ENCODE measurements at regions of chr6 and their contacts with region 1.

Region 1: DNA sequence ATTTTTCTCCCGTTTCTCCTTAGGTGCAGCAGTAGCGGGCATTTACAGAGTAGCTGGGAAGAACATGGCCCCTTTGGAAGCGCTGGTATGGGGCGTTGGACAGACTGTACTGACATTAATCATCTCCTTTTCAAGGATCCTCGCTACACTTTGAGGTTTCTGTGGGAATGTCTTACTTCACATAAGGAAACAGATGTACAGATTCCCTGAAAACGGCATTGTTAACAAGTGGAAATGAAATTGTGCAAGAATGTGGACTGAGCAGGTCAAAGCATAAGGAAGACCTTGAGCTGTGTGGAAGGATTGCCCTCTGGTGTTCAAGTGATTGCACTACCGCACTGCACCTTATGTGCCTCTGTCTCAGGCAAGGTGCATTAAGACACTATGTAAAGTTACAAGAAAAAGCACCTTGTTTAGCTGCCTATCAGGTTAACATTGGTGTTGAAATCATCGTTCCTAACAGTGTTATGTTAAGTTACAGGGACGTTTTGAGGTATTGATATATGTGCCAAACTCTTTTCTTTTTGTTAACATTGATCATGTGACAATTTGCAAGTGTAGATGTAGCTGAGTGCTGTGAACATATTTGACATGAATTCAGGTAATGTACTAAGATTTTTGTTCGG is 38.0 kb downstream of the TMEM170B start:
- DNase-seq: peak; percentile 55
- H3K4me3 Mint-ChIP-seq: no peak overlapping the region
- H3K27ac Mint-ChIP-seq: no peak overlapping the region
- H3K4me1 Mint-ChIP-seq: no peaks in the 10 kb centered on the region
- H3K27me3 Mint-ChIP-seq: no peaks in the 10 kb centered on the region
- CTCF ChIP-seq: peak; percentile 70

Region 2: GRCh38 chr6:10954590-10955010 is 620.9 kb before region 1 on chr6:
- CTCF ChIA-PET with region 1: interaction called, 6 read pairs
- intact Hi-C with region 1: loop called (anchors 1 kb)
- DNase-seq: peak; percentile 81
- H3K4me3 Mint-ChIP-seq: no peak overlapping the region
- H3K27ac Mint-ChIP-seq: no peak overlapping the region
- H3K4me1 Mint-ChIP-seq: peaks cover 10% of the 10 kb centered on the region
- H3K27me3 Mint-ChIP-seq: no peaks in the 10 kb centered on the region
- CTCF ChIP-seq: peak; percentile 58